ENCODE measurements at regions of chr17 and their contacts with region 1.

Region 1: DNA sequence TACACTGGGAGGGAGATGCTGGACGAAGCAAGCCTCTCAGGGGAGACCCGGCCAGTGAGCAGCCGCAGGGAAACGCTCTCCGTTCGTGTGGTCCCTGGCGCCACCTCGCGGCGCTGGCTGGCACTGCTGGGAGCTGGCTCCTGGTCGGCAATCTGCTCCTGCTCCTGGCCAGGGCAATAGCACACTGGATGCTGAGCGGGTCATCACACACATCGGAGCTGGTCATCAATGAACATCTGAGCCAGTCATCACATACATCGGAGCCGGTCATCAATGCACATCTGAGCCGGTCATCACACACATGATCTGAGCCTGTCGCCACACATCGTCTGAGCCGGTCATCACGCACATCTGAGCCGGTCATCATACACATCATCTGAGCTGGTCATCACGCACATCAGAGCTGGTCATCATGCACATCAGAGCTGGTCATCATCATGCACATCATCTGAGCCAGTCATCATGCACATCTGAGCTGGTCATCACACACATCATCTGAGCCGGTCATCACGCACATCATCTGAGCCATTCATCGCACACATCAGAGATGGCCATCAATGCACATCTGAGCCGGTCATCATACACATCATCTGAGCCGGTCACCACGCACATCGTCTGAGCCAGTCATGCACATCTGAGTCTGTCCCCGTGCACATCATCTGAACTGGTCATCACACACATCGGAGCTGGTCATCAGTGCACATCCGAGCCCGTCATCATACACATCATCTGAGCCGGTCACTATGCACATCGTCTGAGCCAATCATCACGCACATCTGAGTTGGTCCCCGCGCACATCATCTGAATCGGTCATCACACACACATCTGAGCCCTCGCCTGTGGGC is 217.3 kb downstream of the RBFOX3 start:
- DNase-seq: no peak
- ATAC-seq: peak; percentile 87
- H3K4me3 ChIP-seq: no peak overlapping the region
- H3K27ac ChIP-seq: no peak overlapping the region
- H3K4me1 ChIP-seq: 0 out of 2 replicates have a peak, but pooled peaks cover 3% of the 10 kb centered on the region
- H3K27me3 ChIP-seq: peaks cover 15% of the 10 kb centered on the region
- CTCF ChIP-seq: peak; percentile 98

Region 2: DNA sequence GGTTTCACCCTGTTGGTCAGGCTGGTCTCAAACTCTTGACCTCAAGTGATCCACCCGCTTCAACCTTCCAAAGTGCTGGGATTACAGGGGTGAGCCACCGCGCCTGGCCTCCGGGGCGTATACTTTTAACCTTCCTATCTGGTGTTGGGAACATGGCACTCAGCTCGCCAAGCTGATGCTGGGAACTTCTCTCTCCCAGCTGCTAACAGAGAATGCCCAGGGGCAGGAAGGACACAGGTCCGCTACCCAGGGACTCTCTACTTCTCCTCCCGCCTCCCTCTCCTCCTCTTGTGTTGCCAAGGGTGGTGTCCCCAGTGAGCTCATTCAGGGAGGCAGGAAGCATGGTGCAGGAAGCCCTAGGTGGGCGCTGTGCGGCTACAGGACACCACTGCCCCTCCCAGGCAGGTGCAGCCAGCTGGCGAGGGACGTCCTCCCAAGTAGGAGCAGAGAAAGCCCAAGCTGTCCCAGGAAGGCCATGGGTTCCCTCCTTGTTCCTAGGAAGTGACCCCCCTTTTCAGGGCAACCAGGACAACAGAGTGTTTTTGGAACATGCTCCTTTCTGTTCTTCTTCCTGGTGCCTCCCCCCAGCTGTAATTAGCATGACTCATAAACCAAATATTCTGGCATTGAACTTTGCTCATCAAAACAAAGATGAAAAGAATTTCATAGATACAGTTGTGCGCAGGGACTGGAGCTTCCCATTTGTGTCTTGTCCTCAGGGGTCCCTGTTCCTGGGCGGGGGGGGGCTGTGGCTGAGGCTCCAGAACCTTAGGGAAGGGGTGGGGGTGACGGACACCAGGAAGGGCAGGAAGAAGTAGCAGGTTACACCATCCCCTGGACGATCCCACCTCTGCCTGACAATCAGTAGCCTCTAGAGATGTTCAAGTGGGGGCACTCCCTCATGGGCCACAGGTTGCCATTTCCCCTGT is 367.0 kb before region 1 on chr17:
- CTCF ChIA-PET with region 1: interaction called, 11 read pairs
- POLR2A ChIA-PET with region 1: no interaction called
- in situ Hi-C with region 1: no loop called
- intact Hi-C with region 1: no loop called
- DNase-seq: no peak
- ATAC-seq: no peak
- H3K4me3 ChIP-seq: no peak overlapping the region
- H3K27ac ChIP-seq: no peak overlapping the region
- H3K4me1 ChIP-seq: peaks cover 21% of the 10 kb centered on the region
- H3K27me3 ChIP-seq: peaks cover 28% of the 10 kb centered on the region
- CTCF ChIP-seq: no peak

Region 3: GRCh38 chr17:79045842-79046196 is 347.8 kb before region 1 on chr17:
- CTCF ChIA-PET with region 1: interaction called, 11 read pairs
- POLR2A ChIA-PET with region 1: no interaction called
- in situ Hi-C with region 1: no loop called
- intact Hi-C with region 1: no loop called
- DNase-seq: no peak
- ATAC-seq: peak; percentile 89
- H3K4me3 ChIP-seq: no peak overlapping the region
- H3K27ac ChIP-seq: no peak overlapping the region
- H3K4me1 ChIP-seq: no peaks in the 10 kb centered on the region
- H3K27me3 ChIP-seq: no peaks in the 10 kb centered on the region; the same call in 1 of the 2 replicates
- CTCF ChIP-seq: peak; percentile 99

Region 4: GRCh38 chr17:79087428-79088143 is 306.0 kb before region 1 on chr17:
- CTCF ChIA-PET with region 1: interaction called, 7 read pairs
- POLR2A ChIA-PET with region 1: no interaction called
- in situ Hi-C with region 1: no loop called
- intact Hi-C with region 1: loop called (anchors 2 kb)
- DNase-seq: no peak
- ATAC-seq: peak; percentile 89
- H3K4me3 ChIP-seq: no peak overlapping the region
- H3K27ac ChIP-seq: no peak overlapping the region
- H3K4me1 ChIP-seq: no peaks in the 10 kb centered on the region
- H3K27me3 ChIP-seq: no peaks in the 10 kb centered on the region
- CTCF ChIP-seq: peak; percentile 94

Region 5: GRCh38 chr17:79188048-79188447 is 205.5 kb before region 1 on chr17:
- CTCF ChIA-PET with region 1: interaction called, 10 read pairs
- POLR2A ChIA-PET with region 1: no interaction called
- in situ Hi-C with region 1: no loop called
- intact Hi-C with region 1: loop called (anchors 1 kb)
- DNase-seq: no peak
- ATAC-seq: peak; percentile 74
- H3K4me3 ChIP-seq: no peak overlapping the region
- H3K27ac ChIP-seq: no peak overlapping the region
- H3K4me1 ChIP-seq: no peaks in the 10 kb centered on the region
- H3K27me3 ChIP-seq: peaks cover 41% of the 10 kb centered on the region; the same call in 1 of the 2 replicates
- CTCF ChIP-seq: peak; percentile 91

Region 6: GRCh38 chr17:79220713-79221291 is 172.8 kb before region 1 on chr17:
- CTCF ChIA-PET with region 1: interaction called, 14 read pairs
- POLR2A ChIA-PET with region 1: no interaction called
- in situ Hi-C with region 1: no loop called
- intact Hi-C with region 1: no loop called
- DNase-seq: no peak
- ATAC-seq: peak; percentile 59
- H3K4me3 ChIP-seq: peak overlapping the region in 1 of 2 experiments; percentile 10; a peak in 2 of 4 replicates
- H3K27ac ChIP-seq: no peak overlapping the region
- H3K4me1 ChIP-seq: peaks cover 4% of the 10 kb centered on the region; the same call in 1 of the 2 replicates
- H3K27me3 ChIP-seq: peaks cover 14% of the 10 kb centered on the region
- CTCF ChIP-seq: no peak

Region 7: DNA sequence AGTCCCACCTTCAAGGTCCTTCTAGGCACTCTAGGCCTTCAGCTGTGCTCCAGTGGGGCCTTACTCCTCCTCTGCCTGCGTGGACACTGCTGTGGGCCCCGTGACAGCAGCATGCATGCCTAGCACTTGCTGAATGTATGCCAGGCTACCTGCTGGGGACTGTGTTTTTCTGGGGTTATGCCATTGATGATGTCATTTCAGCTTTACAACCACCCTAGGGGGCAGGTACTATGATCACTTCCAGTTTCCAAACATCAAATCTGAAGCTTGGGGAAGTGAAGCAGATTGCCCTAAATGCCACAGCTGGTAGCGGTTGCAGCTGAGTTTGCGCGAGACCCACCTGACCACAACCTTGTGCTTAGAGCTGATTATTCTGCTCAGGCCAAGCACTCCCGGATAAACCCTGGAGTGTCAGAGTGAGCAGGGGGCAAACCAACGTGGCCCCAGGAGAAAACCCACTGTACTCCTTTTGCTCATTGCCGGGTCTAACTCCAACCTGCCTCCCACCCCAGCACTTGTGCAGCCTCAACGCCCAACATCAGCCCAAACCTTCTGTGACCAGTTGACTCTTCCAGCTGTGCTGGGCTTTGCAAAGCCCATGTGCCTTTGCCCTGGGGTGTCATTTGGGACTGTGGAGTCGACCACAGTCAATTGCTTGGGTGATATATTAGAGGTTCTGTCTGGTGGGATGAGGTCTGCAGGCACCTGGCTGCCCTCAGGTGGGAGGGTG is 150.5 kb before region 1 on chr17:
- CTCF ChIA-PET with region 1: no interaction called
- POLR2A ChIA-PET with region 1: no interaction called
- in situ Hi-C with region 1: no loop called
- intact Hi-C with region 1: no loop called
- DNase-seq: no peak
- ATAC-seq: no peak
- H3K4me3 ChIP-seq: no peak overlapping the region
- H3K27ac ChIP-seq: no peak overlapping the region
- H3K4me1 ChIP-seq: no peaks in the 10 kb centered on the region
- H3K27me3 ChIP-seq: peaks cover 11% of the 10 kb centered on the region
- CTCF ChIP-seq: no peak

Region 8: DNA sequence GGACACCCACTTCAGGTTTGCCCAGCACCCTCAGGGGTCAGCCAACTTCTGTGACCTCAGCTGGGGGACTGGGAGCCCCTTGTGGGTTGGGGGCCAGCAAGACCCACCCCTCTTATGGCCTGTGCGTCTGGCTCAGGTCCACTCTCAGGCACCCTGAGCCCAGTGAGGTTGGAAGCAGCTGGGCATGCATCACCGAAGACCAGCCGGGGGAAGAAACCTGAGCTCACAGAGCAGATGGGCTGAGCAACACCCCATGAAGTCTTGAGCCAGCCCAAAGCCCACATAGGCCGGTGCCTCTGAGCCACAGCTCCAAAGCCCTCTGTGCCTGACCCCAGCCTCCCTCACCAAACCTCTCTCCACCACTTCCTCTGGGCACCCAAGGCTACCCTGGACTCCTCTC is 50.6 kb after region 1 on chr17:
- CTCF ChIA-PET with region 1: no interaction called
- POLR2A ChIA-PET with region 1: no interaction called
- in situ Hi-C with region 1: no loop called
- intact Hi-C with region 1: no loop called
- DNase-seq: no peak
- ATAC-seq: no peak
- H3K4me3 ChIP-seq: no peak overlapping the region
- H3K27ac ChIP-seq: no peak overlapping the region
- H3K4me1 ChIP-seq: no peaks in the 10 kb centered on the region
- H3K27me3 ChIP-seq: no peaks in the 10 kb centered on the region
- CTCF ChIP-seq: no peak

Region 9: DNA sequence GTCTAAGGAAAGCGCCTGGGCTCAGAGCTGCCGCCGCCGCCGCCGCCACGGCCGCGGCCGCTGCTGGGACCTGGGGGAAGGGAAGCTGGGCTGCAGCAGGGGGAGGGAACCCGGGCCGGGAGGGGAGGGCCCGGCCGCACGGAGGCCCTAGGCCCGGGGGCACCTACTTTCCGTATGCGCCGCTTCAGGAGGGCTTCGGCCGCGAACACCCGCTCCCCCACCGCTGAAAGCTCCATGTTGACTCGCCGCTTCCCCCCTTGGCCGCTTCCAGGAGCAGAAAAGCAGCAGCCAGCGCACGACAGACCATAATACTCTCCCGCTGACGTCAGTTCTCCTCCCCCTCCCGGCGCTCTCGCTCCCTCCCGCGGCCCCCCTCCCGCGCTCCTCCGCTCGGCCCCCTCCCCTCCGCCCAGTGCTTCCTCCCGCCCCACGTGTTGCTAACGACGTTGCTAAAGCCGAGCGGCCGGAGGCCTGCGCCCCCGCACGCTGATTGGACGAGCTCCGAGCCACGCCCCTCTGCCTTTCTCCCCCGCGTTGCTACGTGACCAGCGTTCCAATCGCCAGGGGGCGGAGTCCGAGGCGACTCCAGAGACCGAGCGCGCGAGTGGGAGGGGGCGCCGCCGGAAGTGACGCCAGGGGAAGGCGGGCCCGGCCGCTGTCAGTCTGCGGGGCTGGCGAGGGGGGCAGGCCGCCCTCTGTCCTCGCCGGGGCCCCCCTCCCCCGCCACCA is 403.3 kb after region 1 on chr17 and contains the start of gene CBX8:
- CTCF ChIA-PET with region 1: no interaction called
- POLR2A ChIA-PET with region 1: no interaction called
- in situ Hi-C with region 1: no loop called
- intact Hi-C with region 1: no loop called
- DNase-seq: peak; percentile 91
- ATAC-seq: peak; percentile 81
- H3K4me3 ChIP-seq: peak within 1 kb of the TSS; percentile 82 to 91
- H3K27ac ChIP-seq: peak within 1 kb of the TSS; percentile 75
- H3K4me1 ChIP-seq: peaks cover 47% of the 10 kb centered on the region
- H3K27me3 ChIP-seq: no peaks in the 10 kb centered on the region
- CTCF ChIP-seq: no peak
- total RNA-seq, gene CBX8: 15.3 TPM